Activated CD4-positive, alpha-beta T cell treated with anti-CD3 and anti-CD28 coated beads for 36 hours (primary cell): ENCODE measurements at regions of chr17 and their contacts with region 1.

Region 1: DNA sequence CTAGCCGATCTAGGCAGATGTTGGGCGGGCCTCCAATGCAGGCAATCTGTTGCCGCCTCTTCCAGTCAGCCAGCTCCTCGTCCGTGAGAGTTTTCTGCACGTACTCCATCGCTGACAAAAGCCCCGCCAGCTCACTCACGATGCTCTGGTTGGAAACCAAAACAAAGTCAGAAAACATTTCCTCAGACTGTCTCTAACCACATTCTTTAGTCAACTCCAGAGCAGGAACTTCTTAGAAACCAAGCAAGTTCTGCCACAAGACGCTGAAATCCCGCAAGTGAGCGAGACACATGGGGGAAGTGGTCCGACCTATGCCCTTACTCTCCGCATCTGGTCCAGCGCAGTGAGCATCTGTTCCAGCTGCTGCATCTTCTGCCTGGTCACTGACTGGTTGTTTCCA is 49.1 kb downstream of the STAT5A start:
- DNase-seq: peak; percentile 93
- ATAC-seq: peak; percentile 60
- H3K4me3 Mint-ChIP-seq: peak overlapping the region; percentile 53
- H3K27ac Mint-ChIP-seq: peak overlapping the region; percentile 94
- H3K4me1 Mint-ChIP-seq: peaks cover 86% of the 10 kb centered on the region
- H3K27me3 Mint-ChIP-seq: no peaks in the 10 kb centered on the region

Region 2: DNA sequence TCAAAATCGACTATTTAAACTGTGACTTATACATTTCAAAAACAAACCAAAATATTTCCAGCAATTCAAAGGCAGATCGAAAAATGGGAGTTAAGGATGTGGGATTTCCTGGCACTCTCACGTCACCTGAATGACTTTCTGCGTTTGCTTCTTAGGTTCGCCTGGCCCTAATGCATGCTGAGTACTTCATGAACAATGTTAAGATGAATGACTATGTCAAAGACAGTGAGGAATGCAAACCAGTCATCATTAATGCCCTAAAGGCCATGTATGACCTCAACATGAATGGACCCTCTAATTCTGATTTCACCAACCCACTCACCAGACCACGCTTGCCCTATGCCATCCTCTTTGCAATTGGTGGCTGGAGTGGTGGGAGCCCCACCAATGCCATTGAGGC is 492.5 kb before region 1 on chr17:
- CTCF ChIA-PET with region 1: no interaction called
- POLR2A ChIA-PET with region 1: no interaction called
- intact Hi-C with region 1: no loop called
- DNase-seq: no peak
- ATAC-seq: no peak
- H3K4me3 Mint-ChIP-seq: no peak overlapping the region
- H3K27ac Mint-ChIP-seq: no peak overlapping the region
- H3K4me1 Mint-ChIP-seq: peaks cover 3% of the 10 kb centered on the region
- H3K27me3 Mint-ChIP-seq: no peaks in the 10 kb centered on the region

Region 3: GRCh38 chr17:42183741-42184711 is 153.4 kb before region 1 on chr17:
- CTCF ChIA-PET with region 1: no interaction called
- POLR2A ChIA-PET with region 1: no interaction called
- intact Hi-C with region 1: no loop called
- DNase-seq: peak; percentile 89
- ATAC-seq: peak; percentile 70
- H3K4me3 Mint-ChIP-seq: peak overlapping the region; percentile 91
- H3K27ac Mint-ChIP-seq: peak overlapping the region; percentile 88
- H3K4me1 Mint-ChIP-seq: peaks cover 46% of the 10 kb centered on the region
- H3K27me3 Mint-ChIP-seq: peaks cover 7% of the 10 kb centered on the region

Region 4: GRCh38 chr17:42248351-42249179 is 88.9 kb before region 1 on chr17:
- CTCF ChIA-PET with region 1: interaction called, 5 read pairs
- POLR2A ChIA-PET with region 1: interaction called, 12 read pairs
- intact Hi-C with region 1: loop called in 1 of 2 experiments (anchors 1 kb)
- DNase-seq: peak; percentile 87
- ATAC-seq: peak; percentile 81
- H3K4me3 Mint-ChIP-seq: peak overlapping the region; percentile 79
- H3K27ac Mint-ChIP-seq: peak overlapping the region; percentile 100
- H3K4me1 Mint-ChIP-seq: peaks cover 71% of the 10 kb centered on the region
- H3K27me3 Mint-ChIP-seq: no peaks in the 10 kb centered on the region

Region 5: GRCh38 chr17:42312285-42313130 is 24.9 kb before region 1 on chr17:
- CTCF ChIA-PET with region 1: interaction called, 11 read pairs
- POLR2A ChIA-PET with region 1: interaction called, 7 read pairs
- intact Hi-C with region 1: loop called in 1 of 2 experiments (anchors 1 kb)
- DNase-seq: peak; percentile 94
- ATAC-seq: peak; percentile 69
- H3K4me3 Mint-ChIP-seq: peak overlapping the region; percentile 66
- H3K27ac Mint-ChIP-seq: peak overlapping the region; percentile 96
- H3K4me1 Mint-ChIP-seq: peaks cover 90% of the 10 kb centered on the region
- H3K27me3 Mint-ChIP-seq: no peaks in the 10 kb centered on the region

Region 6: DNA sequence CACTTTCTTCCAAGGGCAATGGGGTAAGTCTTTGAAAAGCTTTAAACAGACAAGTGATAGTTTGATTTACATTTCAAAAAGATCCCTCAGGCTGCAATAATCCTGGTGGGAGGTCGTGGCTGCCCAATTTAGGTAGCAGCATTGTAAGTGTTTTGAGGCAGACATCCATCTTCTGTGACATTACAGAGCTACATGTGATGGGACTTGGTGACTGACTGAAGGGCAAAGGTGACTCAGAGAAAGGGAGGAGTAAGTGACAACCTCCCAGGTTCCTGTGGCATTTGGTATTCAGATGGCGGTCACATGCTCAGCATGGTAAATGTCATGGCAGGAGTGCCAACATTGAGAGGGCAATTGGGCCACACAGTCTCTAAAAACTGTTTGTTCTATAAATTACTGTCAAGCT is 24.3 kb after region 1 on chr17:
- CTCF ChIA-PET with region 1: interaction called, 4 read pairs
- POLR2A ChIA-PET with region 1: interaction called, 13 read pairs
- intact Hi-C with region 1: loop called (anchors 1 to 2 kb)
- DNase-seq: peak; percentile 77
- ATAC-seq: peak; percentile 92
- H3K4me3 Mint-ChIP-seq: peak overlapping the region; percentile 42
- H3K27ac Mint-ChIP-seq: peak overlapping the region; percentile 83
- H3K4me1 Mint-ChIP-seq: peaks cover 82% of the 10 kb centered on the region
- H3K27me3 Mint-ChIP-seq: no peaks in the 10 kb centered on the region

Region 7: DNA sequence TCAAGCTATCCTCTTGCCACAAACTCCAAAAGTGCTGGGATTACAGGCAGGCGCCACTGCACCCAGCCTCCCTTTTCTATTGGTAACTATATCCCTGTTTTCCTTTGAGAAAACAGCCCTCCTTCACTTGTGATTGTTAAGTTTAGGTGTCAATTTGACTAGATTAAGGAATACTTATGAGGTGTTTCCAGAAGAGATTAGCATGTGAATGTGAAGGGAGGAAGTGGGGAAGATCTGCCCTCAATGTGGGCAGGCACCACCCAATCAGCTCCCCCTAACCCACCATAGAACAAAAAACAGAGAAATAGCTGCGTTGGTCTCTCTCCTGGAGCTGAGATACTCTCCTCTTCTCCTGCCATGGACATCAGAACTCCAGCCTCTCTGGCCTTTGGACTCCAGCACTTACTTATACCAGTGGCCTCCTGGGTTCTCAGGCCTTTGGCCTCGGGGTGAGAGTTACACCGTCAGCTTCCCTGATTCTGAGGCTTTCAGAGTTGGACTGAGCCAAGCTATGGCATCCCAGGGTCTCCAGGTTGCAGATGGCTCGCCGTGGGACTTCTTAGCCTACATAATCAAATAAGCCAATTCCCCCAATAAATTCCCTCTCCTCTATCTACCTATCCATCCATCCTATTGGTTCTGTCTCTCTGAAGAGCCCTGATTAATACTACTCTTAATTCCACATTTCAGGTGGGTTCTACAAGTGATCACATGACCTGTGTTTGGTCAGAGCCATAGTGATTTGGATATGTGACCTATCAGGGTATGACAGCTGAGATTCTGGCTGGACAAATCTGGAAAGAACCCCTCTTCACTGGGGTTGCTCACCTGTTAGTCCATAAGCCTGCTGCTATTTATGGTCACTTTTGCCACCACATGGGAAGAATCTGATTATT is 62.8 kb after region 1 on chr17:
- CTCF ChIA-PET with region 1: interaction called, 31 read pairs
- POLR2A ChIA-PET with region 1: interaction called, 6 read pairs
- intact Hi-C with region 1: no loop called
- DNase-seq: no peak
- ATAC-seq: no peak
- H3K4me3 Mint-ChIP-seq: no peak overlapping the region
- H3K27ac Mint-ChIP-seq: peak overlapping the region; percentile 2
- H3K4me1 Mint-ChIP-seq: peaks cover 16% of the 10 kb centered on the region
- H3K27me3 Mint-ChIP-seq: peaks cover 2% of the 10 kb centered on the region

Region 8: GRCh38 chr17:43042025-43042628 is 704.7 kb after region 1 on chr17:
- CTCF ChIA-PET with region 1: no interaction called
- POLR2A ChIA-PET with region 1: no interaction called
- intact Hi-C with region 1: no loop called
- DNase-seq: no peak
- ATAC-seq: no peak
- H3K4me3 Mint-ChIP-seq: no peak overlapping the region
- H3K27ac Mint-ChIP-seq: no peak overlapping the region
- H3K4me1 Mint-ChIP-seq: no peaks in the 10 kb centered on the region
- H3K27me3 Mint-ChIP-seq: no peaks in the 10 kb centered on the region